Activated T-helper 2 cell treated with anti-CD3 and anti-CD28 coated beads, Interferon-gamma antibody, Interleukin-2, Interleukin-4, amounts not matched to agents 10 μg/mL and 5 μg/mL and 100 μg/mL, durations not matched to agents 14 hours and 24 hours and 36 hours (primary cell): ENCODE measurements at regions of chr20 and their contacts with region 1.

Region 1: DNA sequence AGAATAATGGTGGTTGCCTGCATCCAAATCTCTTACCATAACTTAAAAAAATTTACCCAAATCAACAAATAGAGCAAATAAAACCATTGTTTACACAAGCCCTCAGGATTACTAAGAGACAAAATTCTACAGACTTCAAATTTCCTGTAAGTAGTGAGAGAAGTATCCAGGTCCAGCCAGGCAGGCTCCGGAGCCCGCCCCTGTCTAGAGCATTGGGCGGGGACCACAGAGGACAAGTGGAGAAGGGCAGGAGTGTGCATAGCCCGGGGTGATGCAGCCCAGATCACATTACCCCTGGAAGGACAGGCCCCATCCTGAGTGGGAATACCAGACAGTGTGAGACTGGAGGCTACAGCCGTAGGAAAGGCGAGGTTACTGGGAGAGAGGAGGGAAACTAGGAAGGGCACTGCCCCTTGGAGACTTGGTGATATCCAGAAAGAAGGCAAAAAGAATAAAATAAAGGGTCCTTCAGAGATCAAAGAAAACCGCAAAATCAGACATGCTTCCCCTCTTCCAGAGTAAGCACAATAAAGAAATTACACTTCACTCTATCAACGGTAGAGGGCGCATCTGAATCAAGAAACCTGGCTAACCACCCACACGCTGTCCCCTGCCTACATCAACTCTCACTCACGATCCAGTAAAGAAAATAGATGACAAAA is 26.6 kb downstream of the RIN2 start:
- DNase-seq: no peak
- H3K4me3 Mint-ChIP-seq: no peak overlapping the region
- H3K27ac Mint-ChIP-seq: no peak overlapping the region
- H3K4me1 Mint-ChIP-seq: peaks cover 4% of the 10 kb centered on the region
- H3K27me3 Mint-ChIP-seq: no peaks in the 10 kb centered on the region

Region 2: GRCh38 chr20:19598117-19598850 is 186.4 kb before region 1 on chr20:
- intact Hi-C with region 1: no loop called
- DNase-seq: no peak
- H3K4me3 Mint-ChIP-seq: no peak overlapping the region
- H3K27ac Mint-ChIP-seq: no peak overlapping the region
- H3K4me1 Mint-ChIP-seq: no peaks in the 10 kb centered on the region
- H3K27me3 Mint-ChIP-seq: no peaks in the 10 kb centered on the region

Region 3: GRCh38 chr20:19835533-19836222 is 51.0 kb after region 1 on chr20:
- intact Hi-C with region 1: loop called (anchors 10 kb)
- DNase-seq: no peak
- H3K4me3 Mint-ChIP-seq: no peak overlapping the region
- H3K27ac Mint-ChIP-seq: no peak overlapping the region
- H3K4me1 Mint-ChIP-seq: peaks cover 8% of the 10 kb centered on the region
- H3K27me3 Mint-ChIP-seq: peaks cover 2% of the 10 kb centered on the region

Region 4: DNA sequence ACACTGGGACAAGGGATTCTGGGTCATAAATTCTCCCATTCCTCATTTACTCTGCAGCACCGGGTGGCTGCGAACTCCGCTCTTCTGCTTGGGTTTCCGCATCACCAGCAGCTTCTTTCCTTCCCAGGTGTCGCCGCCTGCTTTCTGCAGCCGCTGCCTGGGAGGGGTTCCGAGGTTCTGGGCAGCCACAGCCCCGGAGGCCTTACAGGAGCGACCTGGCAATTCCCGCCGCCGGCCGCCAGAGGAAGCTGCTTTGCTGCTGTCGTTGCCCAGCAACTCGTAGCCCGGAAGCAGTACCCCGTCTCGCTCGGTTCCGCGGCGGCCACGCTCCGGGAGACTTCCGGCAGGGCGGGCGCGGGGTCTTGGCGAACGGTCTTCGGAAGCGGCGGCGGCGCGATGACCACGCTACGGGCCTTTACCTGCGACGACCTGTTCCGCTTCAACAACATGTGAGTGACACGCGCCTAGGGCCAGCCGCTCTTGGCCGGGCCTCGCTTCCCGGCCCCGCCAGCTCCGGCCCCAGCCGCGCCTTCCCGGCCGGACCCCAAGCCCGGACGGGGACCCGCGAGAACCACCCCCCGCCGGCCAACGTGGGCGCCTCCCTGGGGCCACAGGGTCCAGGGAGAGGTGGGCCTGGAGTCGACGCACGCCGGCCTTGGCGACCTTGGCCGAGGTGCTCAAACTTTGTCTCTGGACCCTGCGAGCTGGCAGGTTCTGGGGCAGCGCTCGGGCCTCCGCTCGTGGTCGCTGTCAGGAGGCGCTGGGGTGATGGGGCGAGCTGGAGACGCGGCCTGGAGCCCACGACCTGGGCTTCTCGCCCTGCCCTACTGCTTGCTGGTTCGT is 232.6 kb after region 1 on chr20 and contains the start of gene NAA20:
- intact Hi-C with region 1: loop called (anchors 5 kb)
- DNase-seq: peak; percentile 85
- H3K4me3 Mint-ChIP-seq: peak within 1 kb of the TSS; percentile 89
- H3K27ac Mint-ChIP-seq: peak within 1 kb of the TSS; percentile 81
- H3K4me1 Mint-ChIP-seq: peaks cover 34% of the 10 kb centered on the region
- H3K27me3 Mint-ChIP-seq: no peaks in the 10 kb centered on the region
- total RNA-seq, gene NAA20: 72.9 and 76.0 TPM in 2 replicates